Mammary epithelial cell (primary cell): ENCODE measurements at regions of chr5 and their contacts with region 1.

Region 1: GRCh38 chr5:56814963-56815658 is at the start of gene MAP3K1:
- DNase-seq: peak; percentile 80
- H3K4me3 ChIP-seq: peak within 1 kb of the TSS; percentile 80 to 89 (median 83)
- H3K27ac ChIP-seq: peak within 1 kb of the TSS; percentile 61
- H3K4me1 ChIP-seq: peaks cover 13% of the 10 kb centered on the region
- H3K27me3 ChIP-seq: no peaks in the 10 kb centered on the region
- CTCF ChIP-seq: peak in 1 of 2 donors; percentile 36
- total RNA-seq, gene MAP3K1: 10.0 to 18.7 TPM

Region 2: GRCh38 chr5:56279979-56280378 is 535.1 kb before region 1 on chr5:
- CTCF ChIA-PET with region 1: no interaction called
- dilution Hi-C with region 1: loop called (anchors 25 kb)
- in situ Hi-C with region 1: no loop called
- intact Hi-C with region 1: no loop called
- DNase-seq: no peak
- H3K4me3 ChIP-seq: no peak overlapping the region
- H3K27ac ChIP-seq: no peak overlapping the region
- H3K4me1 ChIP-seq: peaks cover 22% of the 10 kb centered on the region
- H3K27me3 ChIP-seq: no peaks in the 10 kb centered on the region
- CTCF ChIP-seq: no peak

Region 3: GRCh38 chr5:56457887-56458812 is 357.0 kb before region 1 on chr5:
- CTCF ChIA-PET with region 1: no interaction called
- dilution Hi-C with region 1: no loop called
- in situ Hi-C with region 1: no loop called
- intact Hi-C with region 1: no loop called
- DNase-seq: no peak
- H3K4me3 ChIP-seq: no peak overlapping the region
- H3K27ac ChIP-seq: no peak overlapping the region
- H3K4me1 ChIP-seq: no peaks in the 10 kb centered on the region
- H3K27me3 ChIP-seq: no peaks in the 10 kb centered on the region
- CTCF ChIP-seq: no peak

Region 4: DNA sequence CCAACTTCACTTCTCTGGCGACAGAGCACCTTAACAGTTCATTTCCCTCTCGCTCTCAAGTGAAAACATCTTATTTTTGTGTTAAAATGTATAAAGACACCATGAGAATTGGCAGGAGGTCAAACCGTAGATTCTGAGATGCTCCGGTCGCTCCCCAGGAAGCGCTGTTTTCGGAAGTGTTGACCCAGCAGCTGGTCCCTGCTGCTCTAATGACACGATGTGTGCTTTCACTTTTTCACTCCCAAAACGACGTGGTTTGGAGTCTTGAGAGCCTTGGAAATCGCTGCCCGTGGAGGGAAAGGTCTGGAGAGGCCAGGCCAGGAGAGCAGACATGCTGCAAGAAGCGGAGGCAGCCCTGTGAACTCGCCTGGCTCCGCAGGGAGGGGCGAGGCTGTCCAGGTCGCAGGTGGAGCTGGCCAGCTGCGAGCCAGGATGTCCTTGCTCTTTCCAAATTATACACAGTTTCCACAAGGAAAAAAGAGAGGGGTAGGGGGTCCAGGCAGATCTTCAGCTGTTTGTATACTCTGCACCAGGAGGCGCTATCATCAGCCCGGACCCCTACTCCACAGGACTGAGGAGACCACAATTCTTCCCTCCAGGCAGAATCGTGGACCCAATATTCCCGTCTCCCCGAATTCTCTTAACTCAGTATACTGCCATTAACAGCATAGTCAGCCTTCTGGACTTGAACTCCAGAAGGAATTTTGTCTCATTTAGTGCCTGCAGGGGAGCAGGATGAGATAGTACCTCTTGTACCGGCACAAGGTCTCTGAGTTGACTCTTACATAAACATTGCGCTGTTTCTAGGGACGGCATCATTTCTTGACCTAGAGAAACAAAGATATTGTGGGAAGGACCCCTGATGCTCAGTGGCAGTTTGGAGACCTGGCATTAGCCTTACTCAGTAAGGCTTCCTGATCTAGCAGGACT is 333.4 kb before region 1 on chr5:
- CTCF ChIA-PET with region 1: no interaction called
- dilution Hi-C with region 1: no loop called
- in situ Hi-C with region 1: no loop called
- intact Hi-C with region 1: loop called (anchors 5 kb)
- DNase-seq: peak; percentile 11
- H3K4me3 ChIP-seq: peak overlapping the region; percentile 47 to 57 (median 48)
- H3K27ac ChIP-seq: no peak overlapping the region
- H3K4me1 ChIP-seq: peaks cover 12% of the 10 kb centered on the region
- H3K27me3 ChIP-seq: no peaks in the 10 kb centered on the region
- CTCF ChIP-seq: peak in 1 of 2 donors; percentile 22

Region 5: DNA sequence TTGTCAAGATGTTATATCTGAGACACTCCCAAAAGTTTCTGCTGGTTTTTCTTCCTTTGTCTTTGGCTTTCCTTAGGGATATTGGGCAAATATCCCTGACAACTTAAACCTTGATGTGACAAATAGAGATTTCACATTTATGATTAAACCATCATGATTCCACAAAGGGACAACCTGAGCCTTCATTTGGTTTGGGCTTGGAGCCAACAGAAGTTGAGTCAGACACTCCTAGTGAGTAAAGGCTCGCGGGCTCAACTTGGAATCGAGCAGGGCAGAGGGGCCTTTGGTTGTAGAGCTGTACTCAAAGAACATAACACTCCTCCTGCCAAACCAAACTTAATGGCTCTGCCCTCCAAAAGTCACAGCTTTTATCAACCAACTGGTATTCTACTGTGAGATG is 290.0 kb before region 1 on chr5:
- CTCF ChIA-PET with region 1: no interaction called
- dilution Hi-C with region 1: no loop called
- in situ Hi-C with region 1: no loop called
- intact Hi-C with region 1: loop called (anchors 2 kb)
- DNase-seq: peak; percentile 81
- H3K4me3 ChIP-seq: no peak overlapping the region
- H3K27ac ChIP-seq: no peak overlapping the region
- H3K4me1 ChIP-seq: peaks cover 43% of the 10 kb centered on the region
- H3K27me3 ChIP-seq: no peaks in the 10 kb centered on the region
- CTCF ChIP-seq: no peak

Region 6: GRCh38 chr5:56543441-56544390 is 271.4 kb before region 1 on chr5:
- CTCF ChIA-PET with region 1: no interaction called
- dilution Hi-C with region 1: no loop called
- in situ Hi-C with region 1: no loop called
- intact Hi-C with region 1: loop called (anchors 1 kb)
- DNase-seq: peak; percentile 87
- H3K4me3 ChIP-seq: no peak overlapping the region
- H3K27ac ChIP-seq: peak overlapping the region; percentile 82
- H3K4me1 ChIP-seq: peaks cover 18% of the 10 kb centered on the region
- H3K27me3 ChIP-seq: no peaks in the 10 kb centered on the region
- CTCF ChIP-seq: no peak

Region 7: GRCh38 chr5:57302164-57302563 is 487.1 kb after region 1 on chr5:
- CTCF ChIA-PET with region 1: no interaction called
- dilution Hi-C with region 1: no loop called
- in situ Hi-C with region 1: no loop called
- intact Hi-C with region 1: no loop called
- DNase-seq: peak; percentile 82
- H3K4me3 ChIP-seq: no peak overlapping the region
- H3K27ac ChIP-seq: no peak overlapping the region
- H3K4me1 ChIP-seq: no peaks in the 10 kb centered on the region
- H3K27me3 ChIP-seq: no peaks in the 10 kb centered on the region
- CTCF ChIP-seq: peak in 1 of 2 donors; percentile 34